Activated CD8-positive, alpha-beta memory T cell treated with anti-CD3 and anti-CD28 coated beads, Interleukin-2, amount 10 ng/mL, durations not matched to agents 7 days and 5 days (primary cell): ENCODE measurements at regions of chr21 and their contacts with region 1.

Region 1: GRCh38 chr21:35051287-35051818 is 2.3 kb upstream of the RUNX1 start:
- DNase-seq: peak; percentile 93
- ATAC-seq: peak; percentile 56
- H3K4me3 Mint-ChIP-seq: peak overlapping the region; percentile 43
- H3K27ac Mint-ChIP-seq: peak overlapping the region; percentile 96
- H3K4me1 Mint-ChIP-seq: peaks cover 54% of the 10 kb centered on the region
- H3K27me3 Mint-ChIP-seq: peaks cover 15% of the 10 kb centered on the region

Region 2: DNA sequence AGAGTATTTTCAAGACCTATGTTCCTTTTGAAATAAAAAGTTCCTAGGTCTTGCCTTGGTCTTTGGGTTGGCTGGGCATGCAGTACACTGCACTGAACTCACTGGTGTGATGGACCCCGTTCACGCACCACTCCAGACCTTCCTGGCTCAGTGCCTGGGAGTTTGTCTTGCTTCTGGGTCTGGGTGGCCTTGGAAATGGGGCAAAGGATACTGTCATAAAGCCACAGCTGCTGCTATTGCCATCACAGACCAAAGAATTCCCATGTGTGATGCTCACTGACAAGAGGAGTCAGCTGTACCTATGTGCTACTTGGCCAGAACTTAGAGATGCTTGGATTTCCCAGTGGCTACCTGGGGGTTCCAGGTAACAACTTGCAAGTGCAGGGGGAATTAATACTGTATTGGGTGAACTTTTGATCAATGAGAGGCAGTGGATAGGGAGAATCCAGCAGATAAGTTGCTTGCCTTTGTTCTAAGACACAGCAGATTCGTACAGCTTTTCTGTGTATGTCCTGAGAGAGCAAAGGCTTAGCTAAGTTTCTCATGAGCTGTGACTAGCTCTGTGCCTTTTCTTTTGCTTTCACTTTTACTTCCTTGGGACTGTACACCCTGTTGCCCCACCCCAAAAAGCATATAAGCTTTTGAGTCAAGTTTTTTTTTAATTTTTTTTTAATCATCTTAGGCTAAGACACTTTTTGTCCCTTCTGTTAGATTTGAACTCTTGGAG is 117.6 kb before region 1 on chr21:
- CTCF ChIA-PET with region 1: interaction called, 18 read pairs
- DNase-seq: peak; percentile 50
- ATAC-seq: peak; percentile 95
- H3K4me3 Mint-ChIP-seq: peak overlapping the region; percentile 62
- H3K27ac Mint-ChIP-seq: peak overlapping the region; percentile 96
- H3K4me1 Mint-ChIP-seq: peaks cover 70% of the 10 kb centered on the region
- H3K27me3 Mint-ChIP-seq: no peaks in the 10 kb centered on the region

Region 3: GRCh38 chr21:34974162-34974981 is 77.0 kb before region 1 on chr21:
- CTCF ChIA-PET with region 1: interaction called, 18 read pairs
- DNase-seq: peak; percentile 74
- ATAC-seq: peak; percentile 91
- H3K4me3 Mint-ChIP-seq: peak overlapping the region; percentile 57
- H3K27ac Mint-ChIP-seq: peak overlapping the region; percentile 82
- H3K4me1 Mint-ChIP-seq: peaks cover 71% of the 10 kb centered on the region
- H3K27me3 Mint-ChIP-seq: peaks cover 20% of the 10 kb centered on the region

Region 4: DNA sequence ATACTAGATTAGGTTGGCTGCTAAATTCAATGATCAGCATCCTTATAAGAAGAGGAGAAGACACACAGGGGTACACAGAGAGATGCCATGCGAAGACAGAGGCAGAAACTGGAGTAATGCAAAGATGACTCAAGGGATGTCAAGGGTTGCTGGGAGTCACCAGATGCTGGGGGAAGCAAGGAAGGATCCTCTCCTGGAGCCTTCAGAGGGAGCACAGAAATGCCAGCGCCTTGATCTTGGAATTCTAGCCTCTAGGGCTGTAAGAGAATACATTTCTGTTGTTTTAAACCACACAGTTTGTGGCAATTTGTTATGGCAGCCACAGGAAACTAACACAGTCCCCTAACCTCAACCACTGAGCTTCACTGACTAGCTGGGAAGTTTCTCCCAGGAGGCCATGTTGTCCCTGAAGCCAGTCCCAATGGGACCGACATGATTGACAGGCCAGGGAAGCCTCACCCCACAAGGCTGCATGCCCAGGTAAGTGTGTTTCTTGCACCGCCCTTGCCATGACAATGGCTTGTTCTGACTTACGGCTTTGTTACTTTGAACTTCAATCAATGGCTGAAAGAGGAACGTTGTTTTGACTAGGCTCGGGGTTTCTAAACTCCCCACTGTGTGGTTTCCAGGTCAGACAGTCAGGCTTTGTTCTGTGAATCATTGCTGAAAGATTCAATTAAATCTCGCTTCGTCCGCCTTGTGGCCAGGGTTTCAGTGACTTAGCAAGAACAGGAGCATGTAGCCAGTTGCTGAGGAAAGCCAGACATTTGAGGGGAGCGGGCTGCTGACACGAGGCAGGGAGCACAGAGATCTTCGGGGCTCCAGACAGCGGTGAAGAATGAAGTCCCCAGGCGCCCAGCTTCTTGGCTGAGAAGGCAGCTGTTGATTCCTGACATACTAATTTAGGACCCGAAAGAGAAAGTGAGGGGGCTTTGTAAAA is 64.5 kb before region 1 on chr21:
- CTCF ChIA-PET with region 1: interaction called, 19 read pairs
- DNase-seq: peak; percentile 94
- ATAC-seq: peak; percentile 41
- H3K4me3 Mint-ChIP-seq: peak overlapping the region; percentile 62
- H3K27ac Mint-ChIP-seq: peak overlapping the region; percentile 87
- H3K4me1 Mint-ChIP-seq: peaks cover 89% of the 10 kb centered on the region
- H3K27me3 Mint-ChIP-seq: no peaks in the 10 kb centered on the region

Region 5: GRCh38 chr21:35026617-35027562 is 24.5 kb before region 1 on chr21:
- CTCF ChIA-PET with region 1: interaction called, 37 read pairs
- DNase-seq: peak; percentile 94
- ATAC-seq: peak; percentile 85
- H3K4me3 Mint-ChIP-seq: peak overlapping the region; percentile 77
- H3K27ac Mint-ChIP-seq: peak overlapping the region; percentile 100
- H3K4me1 Mint-ChIP-seq: peaks cover 80% of the 10 kb centered on the region
- H3K27me3 Mint-ChIP-seq: no peaks in the 10 kb centered on the region

Region 6: DNA sequence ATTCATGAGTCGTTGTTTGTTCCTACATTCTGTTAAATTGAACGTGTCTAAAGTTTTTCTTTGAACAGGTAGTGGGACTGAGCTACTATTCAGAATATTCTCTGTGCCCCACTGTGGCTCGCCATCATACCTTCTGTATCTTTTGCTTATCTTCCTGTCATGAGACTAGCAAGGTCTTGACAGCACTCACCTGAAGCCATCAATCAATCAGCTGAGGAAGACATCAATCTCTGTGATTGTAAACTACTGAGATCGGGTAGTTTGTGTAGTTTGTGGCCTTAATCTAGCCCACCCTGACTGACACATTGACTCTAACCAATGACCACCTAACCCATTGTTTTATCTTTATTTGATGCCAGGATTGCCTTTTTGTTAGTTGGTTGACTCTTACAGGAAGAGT is 15.5 kb after region 1 on chr21:
- CTCF ChIA-PET with region 1: no interaction called
- DNase-seq: no peak
- ATAC-seq: no peak
- H3K4me3 Mint-ChIP-seq: no peak overlapping the region
- H3K27ac Mint-ChIP-seq: no peak overlapping the region
- H3K4me1 Mint-ChIP-seq: peaks cover 8% of the 10 kb centered on the region
- H3K27me3 Mint-ChIP-seq: peaks cover 14% of the 10 kb centered on the region

Region 7: GRCh38 chr21:35400233-35400957 is 349.0 kb after region 1 on chr21:
- CTCF ChIA-PET with region 1: interaction called, 30 read pairs
- DNase-seq: peak; percentile 46
- ATAC-seq: peak; percentile 80
- H3K4me3 Mint-ChIP-seq: no peak overlapping the region
- H3K27ac Mint-ChIP-seq: no peak overlapping the region
- H3K4me1 Mint-ChIP-seq: peaks cover 13% of the 10 kb centered on the region
- H3K27me3 Mint-ChIP-seq: peaks cover 34% of the 10 kb centered on the region